GM10248 (cell line): ENCODE measurements at regions of chr2 and their contacts with region 1.

Region 1: GRCh38 chr2:16281451-16282336 is 341.3 kb downstream of the MYCN start:
- DNase-seq: peak; percentile 37
- CTCF ChIP-seq: peak; percentile 24

Region 2: GRCh38 chr2:15782009-15782751 is 499.5 kb before region 1 on chr2:
- CTCF ChIA-PET with region 1: no interaction called
- POLR2A ChIA-PET with region 1: no interaction called
- DNase-seq: no peak
- CTCF ChIP-seq: no peak

Region 3: DNA sequence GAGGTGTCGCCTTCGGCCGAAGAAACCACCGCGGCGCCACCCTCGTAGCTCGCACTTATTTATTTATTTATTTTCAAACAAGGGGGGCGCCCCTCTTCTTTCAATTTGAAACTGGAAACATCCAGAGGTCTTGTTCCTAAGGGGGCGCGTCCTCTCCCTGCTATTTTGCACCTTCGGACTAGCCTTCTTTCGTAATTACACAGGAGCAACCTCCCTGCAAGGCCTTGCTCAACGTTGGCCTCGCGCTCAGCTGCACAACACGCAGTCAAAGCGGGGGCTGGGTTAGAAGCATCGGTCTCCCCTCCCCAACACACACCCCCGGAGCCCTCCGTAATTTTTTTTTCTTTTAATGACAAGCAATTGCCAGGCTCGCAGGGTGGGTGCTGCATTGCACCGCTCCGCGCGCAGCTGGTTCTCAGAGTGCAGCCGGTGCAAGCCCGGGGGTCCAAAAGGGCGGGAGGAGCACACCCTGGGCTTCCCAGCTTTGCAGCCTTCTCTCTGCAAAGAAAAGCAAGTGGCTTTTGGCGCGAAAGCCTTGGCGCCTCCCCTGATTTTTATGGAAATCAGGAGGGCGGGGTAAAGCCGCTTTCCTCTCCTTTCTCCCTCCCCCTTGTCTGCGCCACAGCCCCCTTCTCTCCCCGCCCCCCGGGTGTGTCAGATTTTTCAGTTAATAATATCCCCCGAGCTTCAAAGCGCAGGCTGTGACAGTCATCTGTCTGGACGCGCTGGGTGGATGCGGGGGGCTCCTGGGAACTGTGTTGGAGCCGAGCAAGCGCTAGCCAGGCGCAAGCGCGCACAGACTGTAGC is 341.6 kb before region 1 on chr2 and contains the start of gene MYCN:
- CTCF ChIA-PET with region 1: interaction called, 30 read pairs
- POLR2A ChIA-PET with region 1: no interaction called
- DNase-seq: no peak
- CTCF ChIP-seq: no peak

Region 4: GRCh38 chr2:16351541-16351940 is 69.8 kb after region 1 on chr2:
- CTCF ChIA-PET with region 1: no interaction called
- POLR2A ChIA-PET with region 1: no interaction called
- DNase-seq: no peak
- CTCF ChIP-seq: no peak